ENCODE measurements at regions of chr2 and their contacts with region 1.

Region 1: GRCh38 chr2:212005085-212005671 is 533.4 kb downstream of the ERBB4 start:
- DNase-seq: peak; percentile 46
- ATAC-seq: no peak

Region 2: DNA sequence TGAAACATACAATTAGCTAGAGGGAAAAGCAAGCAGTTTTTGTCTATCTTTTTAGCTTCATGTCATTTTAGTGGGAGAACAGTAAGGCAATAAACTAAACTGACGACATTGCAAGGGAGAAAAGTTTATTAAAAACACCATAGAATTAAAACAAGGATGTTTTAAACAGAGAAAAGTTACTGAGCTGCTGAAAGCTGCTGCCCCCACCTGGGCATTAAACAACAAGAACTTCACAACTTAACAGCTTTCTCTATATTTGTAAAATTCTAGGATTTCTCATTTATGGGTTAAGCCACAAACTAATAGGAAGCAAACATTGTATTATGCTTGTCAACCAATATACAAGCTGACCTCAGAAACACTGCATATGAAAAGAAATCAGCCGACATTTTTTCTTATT is 244.3 kb after region 1 on chr2:
- intact Hi-C with region 1: loop called (anchors 10 kb)
- DNase-seq: no peak
- ATAC-seq: no peak

Region 3: DNA sequence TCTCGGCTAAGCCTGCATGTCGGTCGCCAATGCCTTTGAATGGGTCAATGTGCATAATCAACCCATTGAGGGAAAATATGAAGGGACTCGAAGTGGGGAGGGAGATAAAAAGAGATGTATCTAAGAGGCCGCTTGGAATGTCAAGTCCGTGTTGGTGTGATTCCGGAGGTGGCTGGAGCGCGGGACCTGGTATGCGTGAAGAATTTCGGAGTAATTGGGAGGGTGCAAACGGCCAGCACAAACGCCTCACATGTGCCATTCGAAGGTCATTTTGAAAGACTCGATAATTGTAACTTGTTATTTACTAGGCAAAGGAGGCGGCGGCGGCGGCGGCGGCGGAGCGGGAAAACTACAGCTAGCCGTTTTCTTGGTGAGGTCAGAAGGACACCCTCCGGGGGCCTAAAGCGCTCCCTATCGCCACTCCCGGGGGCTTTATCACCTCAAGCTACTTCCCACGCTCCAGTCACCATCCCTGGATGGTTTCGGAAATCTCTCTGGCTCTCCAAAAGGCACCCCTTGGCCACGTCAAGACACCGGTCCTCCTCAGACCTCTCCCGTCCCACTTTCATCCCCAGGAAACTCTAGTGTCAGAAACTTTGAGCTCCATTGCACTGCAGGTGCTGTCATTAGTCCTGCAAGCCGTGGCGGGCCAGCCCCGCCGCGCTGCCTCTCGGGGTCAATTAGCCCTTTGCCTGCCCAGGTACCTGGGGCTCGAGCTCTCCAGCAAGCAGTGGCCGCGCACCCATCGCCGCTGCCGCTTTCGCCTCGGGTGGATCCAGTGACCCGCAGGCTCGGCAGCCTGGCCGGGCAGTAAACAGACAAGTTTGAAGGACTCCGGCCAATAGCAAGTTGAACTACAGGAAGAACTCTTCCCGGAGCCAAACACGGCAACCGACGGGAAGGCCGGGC is 531.9 kb after region 1 on chr2:
- intact Hi-C with region 1: loop called (anchors 10 kb)
- DNase-seq: peak; percentile 51
- ATAC-seq: peak; percentile 30